ENCODE measurements at regions of chrX and their contacts with region 1.

Region 1: GRCh38 chrX:128365492-128365891 is 313.3 kb upstream of the ACTRT1 start:
- DNase-seq: no peak
- ATAC-seq: no peak
- H3K4me3 ChIP-seq: no peak overlapping the region
- H3K27ac ChIP-seq: no peak overlapping the region
- H3K4me1 ChIP-seq: no peaks in the 10 kb centered on the region
- H3K27me3 ChIP-seq: no peaks in the 10 kb centered on the region
- CTCF ChIP-seq: no peak

Region 2: DNA sequence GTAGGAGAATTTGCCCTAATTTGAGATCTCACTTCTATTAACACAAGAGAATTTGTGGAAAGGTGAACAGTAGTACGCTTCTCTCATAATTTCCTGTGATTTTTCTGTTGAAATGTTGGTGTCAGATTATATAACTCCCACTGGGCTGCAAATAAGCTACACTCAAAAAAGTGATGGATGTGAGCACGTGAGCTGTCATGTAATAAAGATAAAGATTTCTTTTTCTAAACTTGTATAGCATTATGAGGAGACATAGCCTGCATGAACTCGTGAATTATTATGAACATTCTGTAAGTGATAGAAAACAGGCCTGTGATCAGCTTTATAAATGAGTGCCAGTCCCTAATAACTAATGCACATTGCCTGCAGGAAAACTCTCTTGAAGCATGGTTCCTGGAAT is 43.4 kb after region 1 on chrX:
- CTCF ChIA-PET with region 1: no interaction called
- POLR2A ChIA-PET with region 1: no interaction called
- intact Hi-C with region 1: no loop called
- DNase-seq: no peak
- ATAC-seq: no peak
- H3K4me3 ChIP-seq: no peak overlapping the region
- H3K27ac ChIP-seq: no peak overlapping the region
- H3K4me1 ChIP-seq: no peaks in the 10 kb centered on the region
- H3K27me3 ChIP-seq: no peaks in the 10 kb centered on the region
- CTCF ChIP-seq: no peak

Region 3: GRCh38 chrX:128436397-128437103 is 71.1 kb after region 1 on chrX:
- CTCF ChIA-PET with region 1: no interaction called
- POLR2A ChIA-PET with region 1: no interaction called
- intact Hi-C with region 1: loop called (anchors 10 kb)
- DNase-seq: peak; percentile 65
- ATAC-seq: peak; percentile 84
- H3K4me3 ChIP-seq: no peak overlapping the region
- H3K27ac ChIP-seq: peak overlapping the region; percentile 69
- H3K4me1 ChIP-seq: peaks cover 19% of the 10 kb centered on the region
- H3K27me3 ChIP-seq: no peaks in the 10 kb centered on the region
- CTCF ChIP-seq: no peak

Region 4: DNA sequence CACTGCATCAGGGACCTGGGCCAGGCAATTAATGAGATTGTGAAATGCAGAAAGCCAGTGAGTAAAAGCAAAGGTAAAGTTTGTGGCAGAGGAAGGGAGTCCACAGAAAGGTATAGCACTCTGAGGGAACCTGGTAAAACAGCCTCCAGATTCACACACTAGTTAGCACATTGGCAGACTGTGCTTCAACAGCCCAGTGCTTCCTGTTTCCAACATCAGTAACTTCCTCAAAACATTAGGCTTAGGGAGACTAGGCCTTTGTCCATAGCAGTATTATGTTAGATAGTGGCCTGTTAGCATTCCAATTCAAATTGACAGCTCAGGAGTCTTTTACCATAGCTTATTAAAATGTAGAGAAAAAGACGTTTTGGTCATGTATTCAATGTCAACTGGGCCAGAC is 269.3 kb after region 1 on chrX:
- CTCF ChIA-PET with region 1: no interaction called
- POLR2A ChIA-PET with region 1: no interaction called
- intact Hi-C with region 1: no loop called
- DNase-seq: no peak
- ATAC-seq: no peak
- H3K4me3 ChIP-seq: no peak overlapping the region
- H3K27ac ChIP-seq: no peak overlapping the region
- H3K4me1 ChIP-seq: no peaks in the 10 kb centered on the region
- H3K27me3 ChIP-seq: no peaks in the 10 kb centered on the region
- CTCF ChIP-seq: no peak

Region 5: DNA sequence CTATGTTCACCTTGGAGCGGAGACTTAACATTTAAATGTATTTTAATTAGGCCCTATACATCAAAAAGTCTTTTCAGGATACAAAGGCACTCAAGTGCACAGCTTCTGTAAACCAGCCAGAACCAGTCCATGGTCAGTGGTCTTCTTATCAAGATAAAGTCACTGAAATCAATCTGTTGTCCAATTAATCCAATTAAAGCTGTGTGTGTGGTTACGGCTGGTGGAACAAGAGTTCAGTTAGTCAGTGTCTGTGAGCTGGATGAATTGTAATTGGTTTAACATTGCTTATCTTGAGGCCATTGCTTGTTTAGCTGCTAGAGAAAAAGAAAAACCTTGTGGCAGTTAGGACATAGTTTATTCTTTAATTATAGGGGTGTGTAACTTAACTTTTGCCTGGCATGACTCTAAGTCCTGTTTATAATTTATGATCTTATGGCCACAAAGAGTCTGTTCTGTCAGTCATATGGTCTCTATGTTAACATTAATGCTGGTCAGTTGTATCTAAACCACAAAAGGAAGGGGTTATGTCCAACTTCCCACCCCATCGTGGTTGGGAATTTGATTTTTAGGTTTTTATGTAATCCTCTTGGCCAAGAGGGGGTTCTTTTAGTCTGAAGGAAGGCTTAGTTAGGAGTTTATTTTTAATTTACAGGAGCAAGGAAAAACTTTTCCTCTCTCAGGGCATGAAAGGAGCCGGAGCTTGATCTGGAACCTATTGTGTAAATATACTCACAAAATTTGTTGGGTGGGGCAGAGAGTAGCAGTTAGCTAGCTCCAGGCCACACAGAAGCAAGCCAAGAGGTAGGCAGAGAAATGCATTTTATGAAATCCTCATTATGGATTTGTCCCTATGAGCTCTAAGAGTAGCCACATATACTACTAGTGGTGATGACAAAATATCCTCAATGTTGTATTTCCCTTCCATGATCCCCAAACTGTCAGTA is 352.4 kb after region 1 on chrX:
- CTCF ChIA-PET with region 1: no interaction called
- POLR2A ChIA-PET with region 1: no interaction called
- intact Hi-C with region 1: no loop called
- DNase-seq: no peak
- ATAC-seq: no peak
- H3K4me3 ChIP-seq: no peak overlapping the region
- H3K27ac ChIP-seq: no peak overlapping the region
- H3K4me1 ChIP-seq: no peaks in the 10 kb centered on the region
- H3K27me3 ChIP-seq: no peaks in the 10 kb centered on the region
- CTCF ChIP-seq: no peak

Region 6: GRCh38 chrX:128862557-128862956 is 497.1 kb after region 1 on chrX:
- CTCF ChIA-PET with region 1: no interaction called
- POLR2A ChIA-PET with region 1: no interaction called
- intact Hi-C with region 1: no loop called
- DNase-seq: no peak
- ATAC-seq: no peak
- H3K4me3 ChIP-seq: no peak overlapping the region
- H3K27ac ChIP-seq: no peak overlapping the region
- H3K4me1 ChIP-seq: no peaks in the 10 kb centered on the region
- H3K27me3 ChIP-seq: no peaks in the 10 kb centered on the region
- CTCF ChIP-seq: no peak

Measured in PC-3 (cell line).